Naive thymus-derived CD8-positive, alpha-beta T cell (primary cell): ENCODE measurements at regions of chr5 and their contacts with region 1.

Region 1: DNA sequence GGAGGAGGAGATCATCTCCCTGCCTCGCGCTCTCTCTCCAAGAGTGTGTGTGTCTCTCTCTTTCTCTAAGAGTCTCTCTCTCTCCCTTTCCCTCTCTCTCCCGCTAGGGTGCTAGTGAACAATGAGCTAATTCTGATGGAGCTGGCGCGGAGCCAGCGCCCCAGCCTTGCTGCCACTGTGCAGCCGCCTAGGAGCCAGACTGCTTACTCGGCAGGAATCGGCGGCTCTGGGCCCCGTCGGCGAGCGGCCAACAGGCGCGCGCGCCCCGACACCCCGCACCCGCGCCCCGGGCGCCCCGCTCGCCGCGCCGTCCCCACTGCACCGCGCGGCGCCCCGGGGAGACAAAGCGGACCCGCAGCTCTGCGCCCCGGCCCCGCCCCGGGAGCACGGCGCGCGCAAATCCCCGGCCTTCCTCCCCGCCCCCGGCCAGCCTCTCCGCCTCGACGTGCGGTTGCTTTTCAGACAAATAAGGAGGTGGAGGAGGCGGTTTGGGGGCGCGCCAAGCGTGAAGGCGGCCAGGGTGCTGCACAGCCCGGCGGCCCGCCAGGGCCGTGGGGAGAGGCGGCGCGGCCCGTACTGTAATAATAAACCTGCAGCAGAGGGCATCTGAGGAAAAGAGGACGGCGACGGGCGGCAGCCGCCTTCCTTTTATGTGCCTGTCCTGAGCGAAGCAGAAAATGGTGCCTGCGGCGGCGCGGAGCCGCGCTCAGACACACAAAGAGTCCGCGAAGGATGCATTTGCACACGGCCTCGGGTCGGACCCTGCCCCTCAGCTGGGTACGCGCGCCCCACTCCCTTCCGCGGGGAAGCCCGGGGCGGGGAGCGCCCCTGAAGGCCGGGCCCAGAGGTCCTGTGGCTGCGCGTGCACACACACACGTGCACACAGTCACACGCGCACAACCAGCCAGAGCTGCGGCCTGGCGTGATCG is 625 bp upstream of the NREP start:
- DNase-seq: peak; percentile 73 to 93 (median 84)
- ATAC-seq: peak; percentile 80 to 85
- H3K4me3 Mint-ChIP-seq: peak overlapping the region; percentile 86 to 93 (median 92)
- H3K27ac Mint-ChIP-seq: peak overlapping the region; percentile 83 to 91 (median 88)
- H3K4me1 Mint-ChIP-seq: peaks cover 4 to 27% (median 21%) of the 10 kb centered on the region in 4 donors
- H3K27me3 Mint-ChIP-seq: no peaks in the 10 kb centered on the region

Region 2: DNA sequence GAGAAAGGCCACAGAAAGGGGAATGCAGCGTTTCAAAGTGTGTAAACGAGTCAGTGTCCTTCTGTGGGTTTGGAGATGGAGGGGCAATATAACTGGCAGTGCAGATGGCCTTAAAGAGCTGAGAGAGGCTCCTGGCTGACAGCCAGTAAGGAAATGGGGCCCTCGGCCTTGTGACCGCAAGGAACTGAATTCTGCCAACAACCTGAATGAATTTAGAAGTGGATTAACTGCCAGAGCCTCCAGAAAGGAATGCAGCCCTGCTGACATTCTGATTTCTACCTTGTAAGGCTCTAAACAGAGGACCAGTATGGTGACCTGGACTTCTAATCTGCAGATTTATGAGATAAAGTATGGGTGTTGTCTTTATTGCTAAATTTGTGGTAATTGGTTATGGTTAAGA is 16.9 kb after region 1 on chr5:
- POLR2A ChIA-PET with region 1: no interaction called
- DNase-seq: no peak
- ATAC-seq: no peak
- H3K4me3 Mint-ChIP-seq: no peak overlapping the region
- H3K27ac Mint-ChIP-seq: no peak overlapping the region
- H3K4me1 Mint-ChIP-seq: peaks cover 0 to 8% (median under 1%) of the 10 kb centered on the region in 4 donors
- H3K27me3 Mint-ChIP-seq: peaks cover 0 to 13% (median 9%) of the 10 kb centered on the region in 5 donors

Region 3: GRCh38 chr5:112160652-112161391 is 403.2 kb after region 1 on chr5:
- POLR2A ChIA-PET with region 1: interaction called, 18 read pairs
- DNase-seq: peak; percentile 77 to 96 (median 92)
- ATAC-seq: peak; percentile 89 to 92
- H3K4me3 Mint-ChIP-seq: peak overlapping the region; percentile 90 to 98 (median 94)
- H3K27ac Mint-ChIP-seq: peak overlapping the region; percentile 69 to 95 (median 92)
- H3K4me1 Mint-ChIP-seq: peaks cover 20 to 31% (median 30%) of the 10 kb centered on the region in 4 donors
- H3K27me3 Mint-ChIP-seq: peaks cover 0 to 2% (median 0%) of the 10 kb centered on the region in 5 donors